ENCODE measurements at regions of chr16 and their contacts with region 1.

Region 1: GRCh38 chr16:66977341-66978113 is 10.9 kb upstream of the CES4A start:
- DNase-seq: peak; percentile 86 to 93 (median 88)
- ATAC-seq: peak; percentile 91 to 97 (median 96)
- H3K4me3 ChIP-seq: no peak overlapping the region
- H3K27ac ChIP-seq: no peak overlapping the region
- H3K4me1 ChIP-seq: peaks cover 0 to 9% (median 0%) of the 10 kb centered on the region in 12 donors
- H3K27me3 ChIP-seq: no peaks in the 10 kb centered on the region
- CTCF ChIP-seq: peak; percentile 92 to 98 (median 95)
- POLR2A ChIP-seq: no peak

Region 2: DNA sequence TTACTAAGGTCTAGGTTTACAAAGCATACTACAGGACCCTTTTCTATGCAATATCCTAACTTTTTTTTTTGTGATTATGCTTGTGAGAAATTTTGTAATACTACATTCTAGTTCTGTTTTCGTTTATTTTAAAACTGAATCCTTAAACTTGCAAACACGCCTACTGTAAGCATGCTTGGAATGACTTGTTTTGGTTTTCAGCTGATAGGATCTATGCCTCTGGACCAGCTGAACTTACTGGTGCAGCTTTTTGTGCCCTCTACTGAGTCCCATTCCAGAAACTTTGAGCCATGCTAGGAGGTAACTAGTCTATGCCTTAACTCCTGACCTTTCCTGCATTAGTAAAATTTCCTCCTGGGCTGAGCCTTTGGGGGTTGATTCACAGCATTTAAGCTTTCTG is 91.2 kb before region 1 on chr16:
- intact Hi-C with region 1: no loop called
- DNase-seq: no peak
- ATAC-seq: no peak
- H3K4me3 ChIP-seq: no peak overlapping the region
- H3K27ac ChIP-seq: no peak overlapping the region
- H3K4me1 ChIP-seq: peaks cover 0 to 6% (median 3%) of the 10 kb centered on the region in 12 donors
- H3K27me3 ChIP-seq: no peaks in the 10 kb centered on the region
- CTCF ChIP-seq: no peak
- POLR2A ChIP-seq: no peak

Region 3: DNA sequence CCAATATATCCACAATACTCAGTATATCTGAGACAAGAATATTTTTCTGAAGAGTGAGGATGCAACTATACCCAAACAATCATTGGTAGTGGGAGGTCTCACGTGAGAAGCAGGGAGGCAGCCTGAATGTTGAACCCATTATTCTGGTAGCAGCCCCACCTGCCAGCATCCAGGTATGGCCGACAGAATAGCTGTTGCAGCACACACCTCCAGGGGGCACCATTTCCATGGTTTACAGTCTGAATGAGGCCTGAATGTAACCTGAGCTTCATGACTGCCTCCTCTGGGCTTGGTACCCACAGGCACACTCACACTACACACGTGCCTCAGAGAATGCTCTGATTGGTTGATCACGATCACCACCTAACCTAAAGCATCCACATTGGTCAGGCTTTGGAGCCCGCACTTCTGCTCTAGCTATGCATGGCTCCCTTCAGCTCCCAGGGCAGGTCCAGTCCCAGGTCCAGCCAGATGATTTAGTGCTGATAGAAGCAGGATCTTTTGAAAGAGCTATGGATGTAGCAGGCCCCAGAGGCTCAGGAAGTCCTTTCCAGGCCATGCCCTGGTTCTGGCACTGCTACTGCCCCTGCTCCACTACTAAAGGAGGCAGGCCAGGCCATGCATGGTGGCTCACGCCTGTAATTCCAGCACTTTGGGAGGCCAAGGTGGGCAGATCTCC is 40.4 kb after region 1 on chr16:
- intact Hi-C with region 1: loop called in 1 of 10 experiments (anchors 2 kb)
- DNase-seq: peak in 2 of 5 donors; percentile 45 to 47
- ATAC-seq: peak; percentile 14 to 41 (median 35)
- H3K4me3 ChIP-seq: no peak overlapping the region
- H3K27ac ChIP-seq: no peak overlapping the region
- H3K4me1 ChIP-seq: peaks cover 0 to 22% (median 18%) of the 10 kb centered on the region in 12 donors
- H3K27me3 ChIP-seq: peaks cover 0 to 20% (median 0%) of the 10 kb centered on the region in 9 donors
- CTCF ChIP-seq: peak in 11 of 12 donors; percentile 27 to 59 (median 50)
- POLR2A ChIP-seq: no peak

Region 4: GRCh38 chr16:67028555-67029248 is 51.2 kb after region 1 on chr16 and contains the start of gene CBFB:
- intact Hi-C with region 1: no loop called
- DNase-seq: peak; percentile 94 to 97 (median 94)
- ATAC-seq: peak; percentile 87 to 96 (median 94)
- H3K4me3 ChIP-seq: peak within 1 kb of the TSS; percentile 58 to 99 (median 94)
- H3K27ac ChIP-seq: peak within 1 kb of the TSS; percentile 90 to 100 (median 99)
- H3K4me1 ChIP-seq: peaks cover 0 to 36% (median 28%) of the 10 kb centered on the region in 12 donors
- H3K27me3 ChIP-seq: no peaks in the 10 kb centered on the region
- CTCF ChIP-seq: peak in 2 of 12 donors; percentile 7 to 23
- POLR2A ChIP-seq: peak; percentile 18 to 77
- total RNA-seq, gene CBFB: 16.4 to 53.6 (median 28.1) TPM

Region 5: DNA sequence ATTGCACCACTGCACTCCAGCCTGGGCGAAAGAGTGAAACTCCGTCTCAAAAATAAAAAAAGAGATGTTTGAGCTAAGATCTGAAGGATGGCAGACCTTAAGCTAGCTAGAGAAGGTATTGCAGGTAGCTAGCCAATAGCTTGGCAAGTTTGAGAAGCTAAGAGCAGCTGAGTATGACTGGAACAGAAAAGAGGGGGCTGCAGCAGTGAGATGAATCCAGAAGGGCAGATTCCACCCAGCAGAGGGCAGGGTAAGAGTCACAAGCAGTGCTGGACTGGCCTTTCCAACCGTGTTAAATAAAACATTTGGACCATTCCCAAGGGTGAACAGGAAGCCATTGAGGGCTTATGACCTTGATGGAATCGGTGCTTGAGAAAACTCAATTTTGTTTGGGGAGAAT is 126.5 kb after region 1 on chr16:
- intact Hi-C with region 1: loop called in 4 of 10 experiments (anchors 2 to 5 kb)
- DNase-seq: peak in 2 of 5 donors; percentile 25 to 31
- ATAC-seq: peak; percentile 48 to 77 (median 68)
- H3K4me3 ChIP-seq: no peak overlapping the region
- H3K27ac ChIP-seq: no peak overlapping the region
- H3K4me1 ChIP-seq: peaks cover 0 to 27% (median 6%) of the 10 kb centered on the region in 12 donors
- H3K27me3 ChIP-seq: no peaks in the 10 kb centered on the region
- CTCF ChIP-seq: peak in 11 of 12 donors; percentile 15 to 53 (median 31)
- POLR2A ChIP-seq: no peak

Region 6: GRCh38 chr16:67109407-67110135 is 132.0 kb after region 1 on chr16 and contains the start of gene PHAF1:
- intact Hi-C with region 1: loop called in 3 of 10 experiments (anchors 5 kb)
- DNase-seq: peak; percentile 93 to 98 (median 94)
- ATAC-seq: peak; percentile 97 to 98 (median 98)
- H3K4me3 ChIP-seq: peak within 1 kb of the TSS; percentile 70 to 100 (median 94)
- H3K27ac ChIP-seq: peak within 1 kb of the TSS; percentile 33 to 91 (median 85)
- H3K4me1 ChIP-seq: peaks cover 0 to 60% (median 30%) of the 10 kb centered on the region in 12 donors
- H3K27me3 ChIP-seq: no peaks in the 10 kb centered on the region
- CTCF ChIP-seq: no peak
- POLR2A ChIP-seq: peak; percentile 5 to 94
- total RNA-seq, gene PHAF1: 8.4 to 17.8 (median 11.6) TPM

Region 7: DNA sequence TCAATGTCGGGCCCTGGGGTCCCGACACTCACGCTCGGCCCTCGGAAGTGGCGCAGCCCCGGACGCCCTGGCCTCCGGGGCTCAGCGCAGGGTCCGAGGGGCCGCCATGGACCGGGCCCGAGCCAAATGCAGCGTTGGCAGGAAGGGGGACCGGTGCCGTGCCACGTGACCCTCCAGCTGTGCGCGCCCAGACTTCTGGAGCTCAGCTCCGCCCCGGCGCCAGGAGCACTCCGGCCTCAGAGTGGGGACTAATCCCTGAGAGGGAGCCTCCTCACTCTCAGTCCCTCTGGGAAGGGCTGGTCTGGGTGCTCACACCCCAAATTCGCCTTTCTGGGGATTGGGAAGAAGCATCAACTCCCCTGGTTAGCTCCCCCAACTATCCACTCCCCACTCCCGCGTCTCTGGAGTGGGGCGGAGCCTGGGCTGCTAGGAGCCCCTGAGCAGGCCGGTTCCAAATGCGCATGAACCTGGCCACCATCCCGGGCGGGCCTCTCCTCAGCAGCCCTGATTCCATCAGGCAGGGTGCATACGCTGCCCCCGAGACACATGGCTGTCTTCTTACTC is 173.4 kb after region 1 on chr16 and contains the start of gene B3GNT9:
- intact Hi-C with region 1: loop called (anchors 1 to 2 kb)
- DNase-seq: peak; percentile 84 to 87 (median 84)
- ATAC-seq: peak; percentile 77 to 92 (median 81)
- H3K4me3 ChIP-seq: peak within 1 kb of the TSS; percentile 27 to 75 (median 64)
- H3K27ac ChIP-seq: peak within 1 kb of the TSS; percentile 30 to 93 (median 83)
- H3K4me1 ChIP-seq: peaks cover 0 to 30% (median 16%) of the 10 kb centered on the region in 12 donors
- H3K27me3 ChIP-seq: peaks cover 0 to 17% (median 0%) of the 10 kb centered on the region in 9 donors
- CTCF ChIP-seq: no peak
- POLR2A ChIP-seq: no peak
- total RNA-seq, gene B3GNT9: 8.6 to 17.5 (median 11.9) TPM

Region 8: DNA sequence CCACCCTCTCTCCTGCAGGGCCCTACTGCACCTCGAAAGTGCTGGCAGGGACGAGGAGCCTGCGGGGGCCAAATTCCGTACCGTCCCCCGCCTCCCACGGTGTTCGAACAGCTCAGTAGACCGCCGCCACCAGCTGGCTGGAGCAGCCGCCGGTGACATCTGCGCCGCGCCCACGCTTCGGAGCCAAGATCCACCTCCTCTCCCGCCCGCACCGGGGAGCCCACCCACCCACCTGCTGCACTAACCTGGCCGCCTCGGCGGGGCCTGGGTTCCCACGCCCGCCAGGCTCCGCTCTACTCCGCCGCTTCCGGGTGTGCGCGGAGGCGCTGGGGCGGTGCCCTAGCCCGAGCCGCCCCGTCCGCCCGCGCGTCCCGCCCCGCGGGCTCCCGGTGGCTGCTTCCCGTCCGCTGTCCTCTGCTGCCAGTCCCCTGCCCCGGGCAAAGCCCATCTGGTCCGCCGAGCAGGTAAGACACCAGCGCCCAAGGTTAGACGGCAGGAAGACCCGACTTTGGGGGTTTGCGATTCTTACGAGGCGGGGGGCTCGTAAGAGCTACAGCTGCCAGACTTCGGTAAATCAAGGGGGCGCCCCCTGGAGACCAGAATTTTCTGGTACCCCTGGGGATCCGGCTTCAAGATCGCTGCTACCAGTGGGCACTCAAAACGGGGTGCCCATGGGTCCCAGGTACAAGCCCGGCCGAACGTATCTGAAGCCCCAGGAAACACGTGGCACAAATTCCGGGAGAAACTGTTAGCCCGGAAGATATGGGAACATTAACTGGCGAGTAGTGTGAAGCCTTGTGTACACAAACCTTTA is 182.3 kb after region 1 on chr16 and contains the starts of genes FBXL8 and TRADD:
- intact Hi-C with region 1: loop called in 9 of 10 experiments (anchors 1 to 2 kb)
- DNase-seq: peak; percentile 75 to 88 (median 82)
- ATAC-seq: peak; percentile 23 to 75 (median 71)
- H3K4me3 ChIP-seq: peak within 1 kb of the TSS; percentile 75 to 98 (median 97)
- H3K27ac ChIP-seq: peak within 1 kb of the TSS; percentile 36 to 94 (median 83)
- H3K4me1 ChIP-seq: peaks cover 0 to 68% (median 58%) of the 10 kb centered on the region in 12 donors
- H3K27me3 ChIP-seq: peaks cover 0 to 32% (median 2%) of the 10 kb centered on the region in 9 donors
- CTCF ChIP-seq: peak in 11 of 12 donors; percentile 7 to 59 (median 38)
- POLR2A ChIP-seq: peak in 1 of 2 donors; percentile 76
- total RNA-seq, gene FBXL8: 5.0 to 13.4 (median 7.2) TPM
- total RNA-seq, gene TRADD: 4.7 to 14.3 (median 8.4) TPM

Region 9: DNA sequence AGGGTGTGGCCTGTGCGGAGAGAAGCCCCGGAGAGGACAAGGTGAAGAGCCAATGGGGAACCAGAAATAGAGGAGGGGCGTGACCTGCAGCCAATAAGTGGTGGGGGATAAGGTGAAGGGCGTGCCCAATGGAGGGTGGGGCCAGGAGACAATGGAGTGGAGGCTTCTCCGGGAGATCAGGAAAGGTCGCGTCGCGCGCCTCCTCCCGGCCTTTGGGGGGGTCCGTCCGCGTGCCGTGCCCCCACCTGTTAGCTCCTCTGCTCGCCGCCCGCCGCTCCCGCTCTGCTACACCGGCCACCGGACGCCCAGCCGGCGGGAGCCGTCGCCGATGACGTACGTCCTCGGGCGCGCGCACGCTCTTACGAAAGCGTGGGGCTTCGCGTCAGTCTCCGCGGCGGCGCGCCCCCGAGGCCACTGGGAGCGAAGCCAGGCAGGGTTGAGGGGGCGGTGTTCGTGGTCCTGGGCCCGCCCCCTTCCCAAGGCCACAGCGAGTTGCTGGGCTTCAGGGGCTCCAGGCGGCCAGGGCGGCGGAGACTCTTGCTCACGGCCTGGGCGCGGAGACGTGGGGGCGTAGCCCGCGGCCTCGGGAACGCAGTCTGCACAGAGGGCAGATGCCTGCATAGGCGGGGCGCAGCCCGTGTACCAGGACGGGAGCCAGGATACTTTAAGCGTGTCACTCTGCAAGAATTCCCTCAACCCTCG is 206.3 kb after region 1 on chr16 and contains the start of gene MATCAP1:
- intact Hi-C with region 1: loop called in 8 of 10 experiments (anchors 1 to 10 kb)
- DNase-seq: peak; percentile 95 to 97 (median 96)
- ATAC-seq: peak; percentile 93 to 96 (median 94)
- H3K4me3 ChIP-seq: peak within 1 kb of the TSS; percentile 47 to 88 (median 72)
- H3K27ac ChIP-seq: peak within 1 kb of the TSS; percentile 90 to 100 (median 96)
- H3K4me1 ChIP-seq: peaks cover 0 to 50% (median 24%) of the 10 kb centered on the region in 12 donors
- H3K27me3 ChIP-seq: no peaks in the 10 kb centered on the region
- CTCF ChIP-seq: peak in 1 of 12 donors; percentile 10
- POLR2A ChIP-seq: peak in 1 of 2 donors; percentile 54
- total RNA-seq, gene MATCAP1: 4.1 to 21.6 (median 11.1) TPM